ENCODE measurements at regions of chr2 and their contacts with region 1.

Region 1: GRCh38 chr2:165479856-165480255 is 10.4 kb downstream of the CSRNP3 start:
- DNase-seq: no peak
- H3K4me3 ChIP-seq: no peak overlapping the region
- H3K27ac ChIP-seq: no peak overlapping the region
- H3K4me1 ChIP-seq: no peaks in the 10 kb centered on the region
- H3K27me3 ChIP-seq: no peaks in the 10 kb centered on the region
- CTCF ChIP-seq: no peak
- POLR2A ChIP-seq: no peak

Region 2: GRCh38 chr2:165505514-165505913 is 25.7 kb after region 1 on chr2:
- intact Hi-C with region 1: loop called (anchors 2 kb)
- DNase-seq: no peak
- H3K4me3 ChIP-seq: no peak overlapping the region
- H3K27ac ChIP-seq: no peak overlapping the region
- H3K4me1 ChIP-seq: peaks cover 0 to 3% of the 10 kb centered on the region in 2 donors
- H3K27me3 ChIP-seq: no peaks in the 10 kb centered on the region
- CTCF ChIP-seq: no peak
- POLR2A ChIP-seq: no peak

Measured in breast epithelium (tissue), 4 donors.